ENCODE measurements at regions of chr11 and their contacts with region 1.

Region 1: DNA sequence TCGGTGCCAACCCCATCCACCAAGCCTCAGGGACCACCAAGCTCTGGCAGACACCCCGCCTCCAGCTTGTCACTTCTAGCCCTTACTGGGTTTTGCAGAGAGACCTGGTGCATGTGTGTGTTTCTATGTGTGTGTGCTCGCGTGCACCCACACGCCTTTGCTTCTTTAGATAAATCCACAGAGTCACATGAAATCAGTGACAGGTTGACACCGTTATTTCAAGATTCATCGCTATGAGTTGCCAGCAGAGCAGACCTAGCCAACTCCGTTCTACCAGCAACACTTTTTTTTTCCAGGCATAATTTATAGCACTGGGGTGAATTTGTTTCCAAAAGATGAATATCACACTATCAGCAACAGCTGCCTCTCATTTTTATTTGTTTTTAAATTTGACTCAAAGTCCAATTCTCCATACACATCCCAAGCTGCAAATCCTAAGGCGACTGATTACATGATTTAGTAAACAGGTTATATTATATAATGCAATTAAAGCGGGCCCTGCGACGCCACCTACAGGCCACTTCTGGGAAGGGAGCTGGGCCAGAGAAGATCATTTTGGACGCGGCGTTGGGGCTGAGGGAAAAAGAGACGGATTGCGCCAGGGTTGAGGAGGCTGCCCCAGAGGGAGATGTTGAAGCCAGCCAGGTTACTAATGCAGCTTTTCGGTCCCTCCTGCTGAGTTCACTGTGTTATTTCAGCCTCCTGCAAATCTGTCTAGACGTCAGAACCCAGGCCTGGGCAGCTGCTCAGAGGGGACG is 150.5 kb downstream of the FEZ1 start:
- DNase-seq: peak; percentile 66
- CTCF ChIP-seq: peak; percentile 72

Region 2: DNA sequence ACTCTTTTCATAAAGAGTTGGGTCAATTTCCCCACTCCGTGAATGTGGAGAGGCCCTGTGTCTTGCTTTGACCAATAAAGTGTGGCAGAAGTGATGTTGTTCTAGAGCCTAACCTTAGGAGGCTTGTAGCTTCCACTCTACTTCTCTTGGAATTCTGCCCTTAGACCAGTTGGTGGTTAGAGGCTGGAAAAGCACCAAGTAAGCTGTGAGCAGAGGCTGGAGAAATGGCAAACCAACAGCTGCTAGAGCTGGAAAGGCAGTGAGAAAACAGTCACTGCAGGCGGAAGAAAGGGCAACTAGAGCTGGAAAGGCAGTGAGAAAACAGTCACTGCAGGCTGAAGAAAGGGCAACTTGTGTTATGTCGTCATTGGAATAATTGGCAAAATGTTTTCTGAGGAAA is 515.6 kb before region 1 on chr11:
- CTCF ChIA-PET with region 1: no interaction called
- POLR2A ChIA-PET with region 1: no interaction called
- DNase-seq: no peak
- CTCF ChIP-seq: no peak

Region 3: DNA sequence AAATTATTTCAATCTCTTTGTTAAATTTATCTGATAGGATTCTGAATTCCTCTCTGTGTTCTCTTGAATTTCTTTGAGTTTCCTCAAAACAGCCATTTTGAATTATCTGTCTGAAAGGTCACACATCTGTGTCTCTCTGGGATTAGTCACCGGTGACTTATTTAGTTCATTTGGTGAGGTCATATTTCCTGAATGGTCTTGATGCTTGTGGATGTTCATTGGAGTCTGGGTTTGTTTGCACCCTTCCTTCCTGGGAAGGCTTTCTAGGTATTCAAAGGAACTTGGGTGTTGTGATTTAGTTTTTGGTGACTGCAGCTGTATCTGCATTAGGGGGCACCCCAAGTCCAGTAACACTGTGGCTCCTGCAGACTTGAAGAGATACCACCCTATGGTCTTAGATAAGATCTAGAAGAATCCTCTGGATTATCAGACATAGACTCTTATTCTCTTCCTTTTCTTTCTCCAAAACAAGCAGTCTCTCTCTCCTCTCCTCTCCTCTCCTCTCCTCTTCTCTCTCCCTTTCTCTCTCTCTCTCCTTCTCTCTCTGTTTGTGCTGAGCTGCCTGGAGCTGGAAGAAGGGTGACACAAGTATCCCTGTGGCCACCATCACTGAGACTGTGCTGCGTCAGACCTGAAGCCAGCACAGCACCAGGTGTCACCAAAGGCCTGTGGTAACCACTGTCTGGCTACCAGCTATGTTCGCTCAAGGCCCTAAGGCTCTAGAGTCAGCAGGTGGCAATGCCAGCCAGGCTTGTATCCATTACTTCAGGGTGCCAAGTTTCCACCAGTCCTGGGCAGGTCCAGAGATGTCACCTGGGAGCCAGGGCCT is 429.8 kb before region 1 on chr11:
- CTCF ChIA-PET with region 1: no interaction called
- POLR2A ChIA-PET with region 1: no interaction called
- DNase-seq: no peak
- CTCF ChIP-seq: no peak

Region 4: DNA sequence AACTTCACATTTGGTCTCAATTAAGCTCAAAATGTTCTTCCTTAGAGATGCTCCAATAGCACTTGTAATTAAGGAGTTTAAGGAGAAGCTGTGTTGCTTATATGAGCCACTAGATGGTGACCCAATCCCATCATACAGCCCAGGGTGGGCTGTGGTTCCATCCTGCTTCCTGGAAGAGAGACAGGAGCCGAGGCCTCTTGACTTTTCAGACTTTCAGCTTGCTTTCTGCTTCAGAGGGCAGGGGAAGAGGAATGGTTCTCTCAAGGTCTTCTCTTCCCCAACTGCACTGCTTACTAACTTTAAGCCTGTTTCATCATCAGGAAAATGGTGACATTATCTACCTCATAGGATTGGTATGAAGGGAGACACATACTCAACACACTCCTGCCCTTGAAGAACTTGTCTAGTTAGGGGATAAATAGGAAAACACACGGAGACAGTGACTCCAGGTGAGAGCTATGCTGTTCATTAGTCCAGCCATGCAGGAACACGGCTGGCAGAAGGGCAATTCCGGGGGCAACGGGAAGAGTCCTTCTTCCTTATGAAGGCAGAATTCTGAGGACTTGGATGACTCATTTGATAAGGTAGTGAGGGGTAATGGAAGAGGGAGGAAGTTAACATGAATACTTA is 254.2 kb before region 1 on chr11:
- CTCF ChIA-PET with region 1: interaction called, 13 read pairs
- POLR2A ChIA-PET with region 1: no interaction called
- DNase-seq: peak; percentile 45
- CTCF ChIP-seq: peak; percentile 51

Region 5: GRCh38 chr11:125320347-125321076 is 25.1 kb before region 1 on chr11:
- CTCF ChIA-PET with region 1: interaction called, 49 read pairs
- POLR2A ChIA-PET with region 1: no interaction called
- DNase-seq: no peak
- CTCF ChIP-seq: no peak

Region 6: DNA sequence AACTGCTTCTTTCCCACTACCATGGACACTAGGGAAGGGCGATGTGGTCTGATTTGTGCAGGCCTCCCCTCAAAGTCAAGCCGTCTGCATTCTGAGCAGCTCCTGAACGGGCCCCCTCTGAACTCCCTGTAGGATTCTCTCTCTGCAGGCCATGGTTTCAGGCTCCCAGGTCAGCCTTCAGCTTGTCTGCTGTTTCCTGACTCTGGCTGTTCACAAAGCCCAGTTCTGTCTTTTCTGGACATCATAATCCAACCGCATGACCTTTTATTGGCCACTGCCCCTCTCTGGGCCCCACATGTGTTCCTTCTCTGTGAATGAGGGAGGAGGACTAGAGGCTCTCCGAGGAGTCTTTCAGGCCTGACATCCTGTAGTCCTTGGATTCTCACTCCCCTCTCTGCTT is 10.5 kb before region 1 on chr11:
- CTCF ChIA-PET with region 1: interaction called, 49 read pairs
- POLR2A ChIA-PET with region 1: no interaction called
- DNase-seq: no peak
- CTCF ChIP-seq: no peak

Region 7: DNA sequence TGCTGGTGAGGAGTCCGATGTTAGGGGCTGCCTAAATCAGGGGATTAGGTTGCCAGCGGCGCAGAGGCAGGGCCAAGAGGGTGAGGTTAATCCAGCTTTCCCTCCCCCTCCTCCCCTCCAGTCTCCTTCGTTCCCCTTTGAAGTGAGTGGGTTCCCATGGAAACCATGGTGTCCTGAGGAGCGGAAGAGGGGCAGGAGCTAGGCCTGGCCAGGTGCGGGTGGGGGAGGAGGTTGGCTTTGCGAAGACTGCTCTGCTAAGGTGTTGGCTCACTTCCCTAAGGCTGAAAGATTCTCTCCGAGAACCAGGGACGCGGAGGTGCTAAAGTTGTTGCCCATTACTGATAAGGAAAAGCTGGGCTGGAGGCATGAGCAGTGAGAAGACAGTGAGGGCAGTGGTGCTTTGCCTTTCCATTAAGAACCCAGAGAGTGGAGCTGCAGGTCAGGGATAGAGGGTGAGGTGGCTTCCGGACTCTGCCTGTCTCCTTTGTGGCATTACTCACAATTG is 25.9 kb after region 1 on chr11:
- CTCF ChIA-PET with region 1: interaction called, 16 read pairs
- POLR2A ChIA-PET with region 1: no interaction called
- DNase-seq: no peak
- CTCF ChIP-seq: no peak

Region 8: DNA sequence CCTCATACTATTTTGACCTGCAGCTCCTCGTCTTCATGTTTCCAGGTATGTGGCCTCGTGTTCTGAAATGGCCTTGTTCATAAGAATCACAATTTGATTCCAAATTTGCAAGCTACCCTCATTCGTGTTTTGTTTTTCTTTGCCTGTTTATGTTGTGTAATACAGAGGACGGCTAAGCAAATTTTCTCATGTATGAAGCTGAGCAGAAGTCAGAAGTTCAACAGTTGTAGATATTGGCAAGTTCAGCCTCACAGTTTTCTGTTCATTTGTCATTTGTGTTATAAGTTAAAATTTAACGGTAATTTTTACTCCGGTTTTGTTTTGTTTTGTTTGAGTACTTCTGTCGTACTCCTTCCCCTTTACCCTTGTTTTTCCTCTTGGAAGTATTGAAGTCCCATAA is 263.9 kb after region 1 on chr11:
- CTCF ChIA-PET with region 1: no interaction called
- POLR2A ChIA-PET with region 1: no interaction called
- DNase-seq: no peak
- CTCF ChIP-seq: no peak